ENCODE measurements at regions of chr18 and their contacts with region 1.

Region 1: GRCh38 chr18:70384181-70384790 is 95.4 kb downstream of the SOCS6 start:
- DNase-seq: peak; percentile 92
- ATAC-seq: peak; percentile 80
- H3K4me3 ChIP-seq: peak overlapping the region; percentile 42 to 53
- H3K27ac ChIP-seq: peak overlapping the region; percentile 99
- H3K4me1 ChIP-seq: peaks cover 46 to 74% of the 10 kb centered on the region in 2 experiments
- H3K27me3 ChIP-seq: no peaks in the 10 kb centered on the region
- CTCF ChIP-seq: no peak
- POLR2A ChIP-seq: no peak
- RAD21 ChIP-seq: no peak

Region 2: DNA sequence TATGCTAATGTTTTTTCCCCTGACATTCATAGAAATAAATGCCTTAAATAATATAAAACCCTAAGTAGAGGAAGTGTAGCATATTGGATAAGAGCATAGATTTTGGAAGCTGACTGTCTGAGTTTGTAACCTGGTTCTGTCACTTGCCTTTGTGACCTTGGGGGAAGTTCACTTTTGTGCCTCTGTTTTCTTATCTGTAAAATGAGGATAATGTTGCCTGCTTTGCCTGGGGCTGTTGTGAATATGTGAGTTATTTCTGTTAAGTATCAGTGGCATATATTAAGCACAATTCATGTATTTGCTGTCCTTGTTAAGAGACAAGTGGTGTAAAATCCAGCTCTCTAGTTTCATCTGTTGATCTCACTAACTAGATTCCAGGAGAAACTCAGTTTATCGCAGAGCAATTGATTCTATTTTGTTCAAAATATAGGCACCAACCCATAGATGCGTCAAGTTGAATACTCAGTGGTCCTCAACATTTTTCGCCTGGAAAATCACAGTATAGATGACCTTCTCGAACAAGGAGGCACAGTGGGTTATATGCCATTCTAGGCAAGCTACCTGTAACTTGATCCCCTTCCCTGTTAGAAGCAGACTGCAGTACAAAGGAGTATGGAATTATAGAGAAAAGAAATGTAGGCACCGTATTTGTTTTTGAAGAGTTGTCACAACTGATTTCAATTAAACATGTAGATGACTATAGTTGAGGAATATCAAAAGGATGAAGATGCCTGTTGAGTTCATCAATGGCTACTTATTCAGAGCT is 28.5 kb before region 1 on chr18:
- CTCF ChIA-PET with region 1: no interaction called
- POLR2A ChIA-PET with region 1: interaction called, 12 read pairs
- RAD21 ChIA-PET with region 1: no interaction called
- intact Hi-C with region 1: loop called (anchors 1 kb)
- DNase-seq: no peak
- ATAC-seq: no peak
- H3K4me3 ChIP-seq: no peak overlapping the region
- H3K27ac ChIP-seq: peak overlapping the region; percentile 98
- H3K4me1 ChIP-seq: peaks cover 43 to 51% of the 10 kb centered on the region in 2 experiments
- H3K27me3 ChIP-seq: no peaks in the 10 kb centered on the region
- CTCF ChIP-seq: no peak
- POLR2A ChIP-seq: no peak
- RAD21 ChIP-seq: no peak

Region 3: DNA sequence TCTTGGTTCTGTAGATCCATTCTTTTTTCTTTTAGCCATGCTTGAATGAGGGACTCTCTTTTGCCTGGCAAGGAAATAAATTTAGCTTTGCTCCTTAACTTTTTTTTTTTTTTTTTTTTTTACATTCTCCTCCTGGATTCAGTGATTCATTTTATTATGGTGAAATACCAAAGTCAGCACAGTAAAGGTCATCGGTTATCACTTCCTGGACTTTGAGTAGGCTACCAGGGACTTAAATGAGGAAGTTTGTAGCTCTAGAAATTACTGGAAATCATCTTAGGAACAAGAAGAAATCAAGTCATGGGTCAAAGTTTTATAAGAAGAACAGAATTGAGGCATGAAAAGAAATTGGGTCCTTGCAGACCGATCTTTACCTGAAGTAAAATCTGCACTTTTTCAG is 20.4 kb before region 1 on chr18:
- CTCF ChIA-PET with region 1: no interaction called
- POLR2A ChIA-PET with region 1: interaction called, 16 read pairs
- RAD21 ChIA-PET with region 1: interaction called in 1 of 2 experiments, 7 read pairs
- intact Hi-C with region 1: no loop called
- DNase-seq: peak; percentile 72
- ATAC-seq: peak; percentile 61
- H3K4me3 ChIP-seq: peak overlapping the region in 1 of 2 experiments; percentile 11; a peak in 1 of 4 replicates
- H3K27ac ChIP-seq: peak overlapping the region; percentile 97
- H3K4me1 ChIP-seq: peaks cover 89 to 97% of the 10 kb centered on the region in 2 experiments
- H3K27me3 ChIP-seq: no peaks in the 10 kb centered on the region
- CTCF ChIP-seq: no peak
- POLR2A ChIP-seq: no peak
- RAD21 ChIP-seq: no peak

Region 4: DNA sequence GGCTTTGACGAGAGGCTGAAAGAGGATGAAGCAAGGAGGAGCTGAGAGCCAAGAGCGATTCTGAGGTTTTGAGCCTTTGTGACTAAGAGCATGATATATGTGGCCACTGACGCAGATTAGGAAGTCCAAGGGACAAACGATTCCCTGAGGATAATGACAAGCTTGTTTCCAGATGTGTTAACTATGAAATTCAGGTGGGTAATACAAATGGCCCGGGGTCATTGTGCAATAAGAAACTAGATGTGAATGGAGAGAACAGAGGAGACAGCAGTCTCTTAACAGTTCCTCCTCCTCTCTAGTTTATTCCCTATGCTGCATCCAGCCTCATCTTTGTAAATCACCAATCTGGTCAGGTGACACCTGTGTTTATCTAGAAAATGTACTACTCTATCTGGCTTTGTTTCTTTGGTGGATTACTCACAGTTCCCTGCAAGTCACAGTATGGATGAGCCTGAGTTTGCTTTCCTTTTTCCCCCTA is 11.2 kb before region 1 on chr18:
- CTCF ChIA-PET with region 1: interaction called, 4 read pairs
- POLR2A ChIA-PET with region 1: interaction called, 50 read pairs
- RAD21 ChIA-PET with region 1: interaction called, 3 read pairs
- intact Hi-C with region 1: no loop called
- DNase-seq: peak; percentile 97
- ATAC-seq: peak; percentile 67
- H3K4me3 ChIP-seq: peak overlapping the region in 1 of 2 experiments; percentile 27; a peak in 2 of 4 replicates
- H3K27ac ChIP-seq: peak overlapping the region; percentile 92
- H3K4me1 ChIP-seq: peaks cover 86 to 95% of the 10 kb centered on the region in 2 experiments
- H3K27me3 ChIP-seq: no peaks in the 10 kb centered on the region
- CTCF ChIP-seq: no peak
- POLR2A ChIP-seq: no peak
- RAD21 ChIP-seq: no peak

Region 5: DNA sequence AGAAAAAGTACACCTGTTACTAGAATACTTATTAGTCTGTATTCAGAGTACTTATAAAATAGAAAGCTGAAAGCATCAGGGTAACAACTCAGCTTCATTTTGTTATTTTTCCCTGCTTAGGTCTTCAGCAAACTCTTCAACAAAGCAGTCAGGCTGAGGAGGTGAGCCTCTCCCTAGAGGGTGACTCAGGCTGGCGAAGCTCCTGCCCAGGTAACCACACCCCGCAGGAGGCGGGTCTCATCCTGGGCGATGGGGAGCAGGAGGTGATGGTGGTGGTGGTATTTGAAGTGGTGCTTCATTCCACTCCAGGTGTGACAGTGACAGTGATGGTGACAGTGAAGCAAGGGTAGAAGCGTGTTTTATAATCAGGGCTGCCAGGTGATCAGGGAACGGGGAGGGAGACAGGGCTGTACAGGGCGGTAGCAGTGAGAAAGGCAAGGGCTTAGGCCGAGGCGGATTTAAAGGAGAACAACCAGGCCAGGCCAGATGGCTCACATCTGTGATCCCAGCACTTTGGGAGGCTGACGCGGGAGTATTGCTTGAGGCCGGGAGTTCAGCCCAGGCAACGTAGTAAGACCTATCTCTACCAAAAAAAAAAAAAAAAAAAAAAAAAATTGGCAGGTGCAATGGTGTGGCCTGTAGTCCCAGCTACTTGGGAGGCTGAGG is 31.7 kb after region 1 on chr18:
- CTCF ChIA-PET with region 1: no interaction called
- POLR2A ChIA-PET with region 1: interaction called, 11 read pairs
- RAD21 ChIA-PET with region 1: no interaction called
- intact Hi-C with region 1: no loop called
- DNase-seq: peak; percentile 64
- ATAC-seq: peak; percentile 93
- H3K4me3 ChIP-seq: peak overlapping the region in 1 of 2 experiments; percentile 4; a peak in 3 of 4 replicates
- H3K27ac ChIP-seq: peak overlapping the region; percentile 54
- H3K4me1 ChIP-seq: peaks cover 57 to 85% of the 10 kb centered on the region in 2 experiments
- H3K27me3 ChIP-seq: no peaks in the 10 kb centered on the region
- CTCF ChIP-seq: no peak
- POLR2A ChIP-seq: no peak
- RAD21 ChIP-seq: no peak

Region 6: GRCh38 chr18:70421471-70422390 is 37.4 kb after region 1 on chr18:
- CTCF ChIA-PET with region 1: no interaction called
- POLR2A ChIA-PET with region 1: interaction called, 48 read pairs
- RAD21 ChIA-PET with region 1: interaction called in 1 of 2 experiments, 3 read pairs
- intact Hi-C with region 1: loop called (anchors 1 kb)
- DNase-seq: peak; percentile 94
- ATAC-seq: peak; percentile 58
- H3K4me3 ChIP-seq: peak overlapping the region in 1 of 2 experiments; percentile 17; a peak in 2 of 4 replicates
- H3K27ac ChIP-seq: peak overlapping the region; percentile 99
- H3K4me1 ChIP-seq: peaks cover 82 to 97% of the 10 kb centered on the region in 2 experiments
- H3K27me3 ChIP-seq: no peaks in the 10 kb centered on the region
- CTCF ChIP-seq: no peak
- POLR2A ChIP-seq: no peak
- RAD21 ChIP-seq: no peak

Measured in HCT116 (cell line).